ENCODE measurements at regions of chr2 and their contacts with region 1.

Region 1: GRCh38 chr2:46073540-46074018 is 223.6 kb upstream of the EPAS1 start:
- DNase-seq: peak; percentile 97
- H3K4me3 ChIP-seq: peak overlapping the region; percentile 13 to 88 (median 27)
- H3K27ac ChIP-seq: peak overlapping the region; percentile 84
- H3K4me1 ChIP-seq: peaks cover 71% of the 10 kb centered on the region
- H3K27me3 ChIP-seq: no peaks in the 10 kb centered on the region
- CTCF ChIP-seq: no peak
- POLR2A ChIP-seq: peak; percentile 65

Region 2: GRCh38 chr2:46041434-46041833 is 32.1 kb before region 1 on chr2:
- CTCF ChIA-PET with region 1: no interaction called
- POLR2A ChIA-PET with region 1: no interaction called
- dilution Hi-C with region 1: no loop called
- intact Hi-C with region 1: no loop called
- DNase-seq: no peak
- H3K4me3 ChIP-seq: no peak overlapping the region
- H3K27ac ChIP-seq: no peak overlapping the region
- H3K4me1 ChIP-seq: peaks cover 24% of the 10 kb centered on the region
- H3K27me3 ChIP-seq: no peaks in the 10 kb centered on the region
- CTCF ChIP-seq: no peak
- POLR2A ChIP-seq: no peak

Region 3: DNA sequence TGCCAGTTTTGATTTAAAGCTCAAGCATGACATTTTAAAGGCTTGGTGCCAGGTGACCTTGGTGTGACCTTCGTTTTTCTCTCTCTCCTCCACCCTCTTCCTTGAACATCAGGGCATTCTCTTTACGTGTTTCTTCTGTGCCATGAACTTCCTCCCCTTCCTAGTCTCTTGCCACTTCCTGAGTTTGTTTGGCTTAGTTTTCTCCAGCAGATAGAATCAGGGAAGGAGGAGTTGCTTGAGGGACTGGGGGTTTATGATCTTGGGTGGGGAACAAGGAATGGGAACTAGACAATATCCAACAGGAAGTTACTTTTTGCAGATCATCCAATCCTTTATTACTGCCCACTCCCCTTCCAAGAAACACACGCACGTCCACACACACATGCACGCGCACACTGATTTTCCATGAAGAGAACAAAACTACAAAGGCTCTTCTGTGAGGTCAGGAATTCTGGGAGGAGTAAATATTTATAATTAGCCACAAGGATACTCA is 13.0 kb after region 1 on chr2:
- CTCF ChIA-PET with region 1: no interaction called
- POLR2A ChIA-PET with region 1: interaction called, 7 read pairs
- dilution Hi-C with region 1: no loop called
- intact Hi-C with region 1: loop called (anchors 1 kb)
- DNase-seq: peak; percentile 82
- H3K4me3 ChIP-seq: no peak overlapping the region
- H3K27ac ChIP-seq: peak overlapping the region; percentile 39
- H3K4me1 ChIP-seq: peaks cover 42% of the 10 kb centered on the region
- H3K27me3 ChIP-seq: no peaks in the 10 kb centered on the region
- CTCF ChIP-seq: no peak
- POLR2A ChIP-seq: no peak

Region 4: DNA sequence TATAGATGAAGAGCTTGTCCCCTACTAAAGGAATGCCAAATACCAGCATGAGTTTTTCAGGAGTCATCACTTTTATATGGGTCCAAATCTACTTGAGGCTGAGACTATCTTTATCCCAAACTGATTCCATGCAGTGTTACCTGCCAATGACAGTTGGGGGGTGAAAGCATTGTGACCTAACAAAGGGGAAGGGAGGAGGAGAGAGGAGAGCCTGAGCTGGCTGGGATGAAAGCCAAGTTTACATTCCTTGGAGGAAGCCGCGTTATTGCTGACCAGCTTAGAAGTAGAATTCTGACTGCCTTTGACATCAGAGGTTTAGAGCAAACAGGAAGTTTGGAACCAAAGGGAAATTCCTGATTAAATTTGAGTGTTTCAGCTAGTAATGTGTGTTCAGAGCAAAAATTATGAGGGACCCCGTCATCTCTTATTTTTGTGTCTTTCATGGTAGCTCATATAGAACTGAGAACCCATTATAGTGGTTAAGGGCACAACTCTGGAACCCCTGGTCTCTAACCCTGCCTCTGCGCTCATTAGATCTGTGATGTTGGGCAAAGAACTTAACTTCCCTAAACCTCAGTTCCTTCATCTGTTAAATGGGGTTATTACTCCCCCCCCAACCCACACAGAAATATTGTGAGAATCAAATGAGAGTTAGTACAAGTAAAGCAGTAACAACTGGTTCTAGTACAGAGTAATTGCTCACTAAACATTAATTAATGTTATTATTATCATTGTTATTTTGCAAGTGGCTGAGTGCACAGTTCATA is 24.3 kb after region 1 on chr2:
- CTCF ChIA-PET with region 1: interaction called, 7 read pairs
- POLR2A ChIA-PET with region 1: interaction called, 4 read pairs
- dilution Hi-C with region 1: no loop called
- intact Hi-C with region 1: loop called (anchors 1 kb)
- DNase-seq: peak; percentile 96
- H3K4me3 ChIP-seq: no peak overlapping the region
- H3K27ac ChIP-seq: peak overlapping the region; percentile 95
- H3K4me1 ChIP-seq: peaks cover 17% of the 10 kb centered on the region
- H3K27me3 ChIP-seq: no peaks in the 10 kb centered on the region
- CTCF ChIP-seq: no peak
- POLR2A ChIP-seq: no peak

Region 5: DNA sequence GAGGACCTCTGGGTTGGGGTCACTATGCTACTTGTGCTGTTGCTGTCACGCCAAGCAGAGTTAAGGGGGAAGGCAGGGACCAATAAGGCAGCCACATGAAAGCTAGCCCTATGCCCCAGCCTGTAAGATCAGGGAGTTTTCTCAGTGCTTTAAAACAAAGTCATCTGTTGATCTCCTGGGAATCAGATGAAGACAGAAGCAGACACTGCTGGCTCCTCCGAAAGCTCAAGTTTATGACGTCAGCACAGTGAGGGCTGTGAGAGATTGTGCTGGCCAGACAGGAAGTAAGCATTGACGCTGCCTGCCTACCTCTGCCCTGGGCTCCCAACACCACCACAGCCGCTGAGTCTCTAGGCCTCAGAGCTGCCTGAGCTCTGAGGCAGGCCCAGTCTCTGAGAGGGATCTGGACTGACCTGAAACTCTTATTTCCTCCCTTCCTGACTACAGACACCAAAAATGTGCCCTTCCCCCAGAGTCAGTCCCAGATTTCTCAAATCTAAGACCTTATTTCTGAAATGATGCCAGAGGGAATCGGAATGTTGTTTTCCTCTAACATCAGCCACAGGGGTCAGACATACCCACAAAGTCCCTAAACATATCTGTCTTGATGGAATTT is 105.6 kb after region 1 on chr2:
- CTCF ChIA-PET with region 1: interaction called, 3 read pairs
- POLR2A ChIA-PET with region 1: no interaction called
- dilution Hi-C with region 1: no loop called
- intact Hi-C with region 1: loop called (anchors 2 kb)
- DNase-seq: peak; percentile 88
- H3K4me3 ChIP-seq: no peak overlapping the region
- H3K27ac ChIP-seq: peak overlapping the region; percentile 84
- H3K4me1 ChIP-seq: peaks cover 13% of the 10 kb centered on the region
- H3K27me3 ChIP-seq: no peaks in the 10 kb centered on the region
- CTCF ChIP-seq: no peak
- POLR2A ChIP-seq: no peak

Region 6: GRCh38 chr2:46706264-46706983 is 632.8 kb after region 1 on chr2:
- CTCF ChIA-PET with region 1: no interaction called
- POLR2A ChIA-PET with region 1: no interaction called
- dilution Hi-C with region 1: no loop called
- intact Hi-C with region 1: no loop called
- DNase-seq: peak; percentile 15
- H3K4me3 ChIP-seq: no peak overlapping the region
- H3K27ac ChIP-seq: no peak overlapping the region
- H3K4me1 ChIP-seq: peaks cover 10% of the 10 kb centered on the region
- H3K27me3 ChIP-seq: no peaks in the 10 kb centered on the region
- CTCF ChIP-seq: no peak
- POLR2A ChIP-seq: no peak